ENCODE measurements at regions of chr11 and their contacts with region 1.

Region 1: GRCh38 chr11:60906132-60906972 is at the start of gene PRPF19:
- DNase-seq: peak; percentile 99
- H3K4me3 ChIP-seq: peak within 1 kb of the TSS; percentile 77 to 89 (median 84)
- H3K27ac ChIP-seq: peak within 1 kb of the TSS; percentile 86
- H3K4me1 ChIP-seq: peaks cover 25% of the 10 kb centered on the region
- H3K27me3 ChIP-seq: peaks cover 0 to 6% of the 10 kb centered on the region in 2 experiments
- CTCF ChIP-seq: no peak
- POLR2A ChIP-seq: peak; percentile 94
- total RNA-seq, gene PRPF19: 114 and 126 TPM in 2 replicates

Region 2: GRCh38 chr11:60939855-60940254 is 33.5 kb after region 1 on chr11:
- CTCF ChIA-PET with region 1: no interaction called
- POLR2A ChIA-PET with region 1: no interaction called
- dilution Hi-C with region 1: no loop called
- intact Hi-C with region 1: loop called (anchors 1 kb)
- DNase-seq: no peak
- H3K4me3 ChIP-seq: no peak overlapping the region
- H3K27ac ChIP-seq: no peak overlapping the region
- H3K4me1 ChIP-seq: peaks cover 8% of the 10 kb centered on the region
- H3K27me3 ChIP-seq: no peaks in the 10 kb centered on the region
- CTCF ChIP-seq: no peak
- POLR2A ChIP-seq: no peak